CD8-positive, alpha-beta memory T cell (primary cell): ENCODE measurements at regions of chr3 and their contacts with region 1.

Region 1: DNA sequence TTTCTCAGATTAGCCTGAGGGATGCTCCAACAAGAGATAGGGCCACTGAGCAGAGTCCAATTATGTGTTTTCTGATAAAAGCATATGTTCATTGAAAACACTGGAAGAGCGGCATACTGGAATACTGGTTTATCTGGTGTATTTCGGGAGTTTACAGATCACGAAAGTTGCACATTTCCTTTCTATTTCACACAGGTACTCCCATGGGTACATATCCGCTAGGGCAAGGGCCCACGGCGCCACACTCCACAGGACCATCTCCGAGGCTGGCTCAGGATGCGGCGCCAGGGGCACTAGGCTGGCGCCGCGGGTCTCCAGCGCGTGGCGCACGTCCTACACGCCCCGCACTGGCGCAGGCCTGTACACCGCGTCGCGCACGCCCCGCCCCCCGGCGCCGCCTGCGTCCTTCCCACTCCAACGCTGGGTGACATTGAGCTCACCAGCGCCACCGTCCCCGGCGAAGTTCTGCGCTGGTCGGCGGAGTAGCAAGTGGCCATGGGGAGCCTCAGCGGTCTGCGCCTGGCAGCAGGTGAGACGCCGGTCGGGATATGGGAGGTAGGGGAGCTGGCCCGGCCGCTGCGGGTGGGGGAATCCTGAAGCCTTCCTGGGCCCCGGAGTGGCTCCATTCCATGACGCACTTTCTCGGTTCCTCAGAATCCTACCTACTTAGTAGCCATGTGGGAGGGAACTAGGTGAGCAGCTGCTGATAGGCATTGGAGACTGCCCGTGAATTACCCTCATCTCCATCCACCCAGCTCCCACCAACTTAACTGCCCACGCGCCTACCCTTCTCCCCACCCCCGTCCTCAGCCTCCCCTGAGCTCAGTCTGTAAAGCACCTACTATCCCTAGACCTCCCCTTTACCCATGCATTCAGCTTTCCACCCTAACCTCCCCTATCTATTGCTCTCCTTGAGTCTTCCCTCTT is at the start of gene FAM162A:
- DNase-seq: peak; percentile 90 to 94 (median 92)
- H3K4me3 ChIP-seq: peak within 1 kb of the TSS; percentile 74
- H3K4me3 Mint-ChIP-seq: peak within 1 kb of the TSS; percentile 90 to 98 (median 95)
- H3K27ac ChIP-seq: peak within 1 kb of the TSS; percentile 82
- H3K27ac Mint-ChIP-seq: peak within 1 kb of the TSS; percentile 92 to 99 (median 96)
- H3K4me1 ChIP-seq: peaks cover 30% of the 10 kb centered on the region
- H3K4me1 Mint-ChIP-seq: peaks cover 39 to 58% (median 55%) of the 10 kb centered on the region in 3 donors
- H3K27me3 ChIP-seq: no peaks in the 10 kb centered on the region
- H3K27me3 Mint-ChIP-seq: no peaks in the 10 kb centered on the region
- total RNA-seq, gene FAM162A: 62.6 to 63.3 TPM

Region 2: DNA sequence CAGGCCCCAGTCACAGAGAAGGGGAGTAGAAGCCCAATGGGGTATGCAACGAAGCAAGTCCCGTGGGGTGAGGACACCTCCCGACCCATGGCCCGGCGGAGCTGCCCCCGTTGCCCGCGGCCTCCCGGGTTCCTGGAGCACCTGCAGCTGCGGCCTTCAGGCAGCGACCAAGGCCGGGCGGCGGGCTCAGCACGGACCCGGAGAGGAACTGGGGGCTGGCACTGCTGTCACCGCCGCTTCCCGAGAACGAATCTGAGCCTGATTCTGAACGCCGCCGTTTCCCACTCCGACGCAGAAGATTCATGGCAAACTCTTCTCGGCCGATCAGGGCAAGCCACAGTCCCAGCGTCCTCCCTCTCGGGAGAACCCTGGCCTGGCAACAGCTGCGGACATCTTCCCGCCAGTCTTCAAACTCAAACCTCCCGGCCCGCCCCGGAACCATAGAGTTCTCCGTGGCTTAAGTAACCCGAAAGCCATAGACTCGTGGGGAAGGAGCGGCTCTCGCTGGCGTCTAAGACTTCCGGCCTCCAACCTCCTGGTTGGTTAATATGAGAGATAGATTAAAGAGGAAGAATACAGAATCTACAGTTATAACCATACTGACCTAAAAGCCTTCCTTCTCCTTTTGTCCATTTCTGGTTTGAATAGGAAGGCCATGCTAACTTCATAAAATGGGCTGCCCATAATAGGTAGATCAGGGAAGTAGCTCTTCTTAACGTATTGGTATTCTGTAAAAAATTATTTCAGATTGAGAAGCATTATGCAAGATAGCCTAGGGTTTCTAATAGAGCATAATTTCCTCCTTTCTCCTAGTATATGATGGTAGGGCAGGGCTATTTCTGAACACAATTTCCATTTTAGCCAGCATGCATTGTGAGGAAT is 838.2 kb before region 1 on chr3 and contains the start of gene POLQ:
- CTCF ChIA-PET with region 1: interaction called, 14 read pairs
- POLR2A ChIA-PET with region 1: interaction called, 3 read pairs
- DNase-seq: peak; percentile 74 to 91 (median 83)
- H3K4me3 ChIP-seq: peak within 1 kb of the TSS; percentile 78
- H3K4me3 Mint-ChIP-seq: peak within 1 kb of the TSS; percentile 83 to 95 (median 90)
- H3K27ac ChIP-seq: peak within 1 kb of the TSS; percentile 69
- H3K27ac Mint-ChIP-seq: peak within 1 kb of the TSS; percentile 80 to 92 (median 90)
- H3K4me1 ChIP-seq: no peaks in the 10 kb centered on the region
- H3K4me1 Mint-ChIP-seq: peaks cover 14 to 18% (median 15%) of the 10 kb centered on the region in 3 donors
- H3K27me3 ChIP-seq: no peaks in the 10 kb centered on the region
- H3K27me3 Mint-ChIP-seq: no peaks in the 10 kb centered on the region
- total RNA-seq, gene POLQ: 12.4 TPM

Region 3: DNA sequence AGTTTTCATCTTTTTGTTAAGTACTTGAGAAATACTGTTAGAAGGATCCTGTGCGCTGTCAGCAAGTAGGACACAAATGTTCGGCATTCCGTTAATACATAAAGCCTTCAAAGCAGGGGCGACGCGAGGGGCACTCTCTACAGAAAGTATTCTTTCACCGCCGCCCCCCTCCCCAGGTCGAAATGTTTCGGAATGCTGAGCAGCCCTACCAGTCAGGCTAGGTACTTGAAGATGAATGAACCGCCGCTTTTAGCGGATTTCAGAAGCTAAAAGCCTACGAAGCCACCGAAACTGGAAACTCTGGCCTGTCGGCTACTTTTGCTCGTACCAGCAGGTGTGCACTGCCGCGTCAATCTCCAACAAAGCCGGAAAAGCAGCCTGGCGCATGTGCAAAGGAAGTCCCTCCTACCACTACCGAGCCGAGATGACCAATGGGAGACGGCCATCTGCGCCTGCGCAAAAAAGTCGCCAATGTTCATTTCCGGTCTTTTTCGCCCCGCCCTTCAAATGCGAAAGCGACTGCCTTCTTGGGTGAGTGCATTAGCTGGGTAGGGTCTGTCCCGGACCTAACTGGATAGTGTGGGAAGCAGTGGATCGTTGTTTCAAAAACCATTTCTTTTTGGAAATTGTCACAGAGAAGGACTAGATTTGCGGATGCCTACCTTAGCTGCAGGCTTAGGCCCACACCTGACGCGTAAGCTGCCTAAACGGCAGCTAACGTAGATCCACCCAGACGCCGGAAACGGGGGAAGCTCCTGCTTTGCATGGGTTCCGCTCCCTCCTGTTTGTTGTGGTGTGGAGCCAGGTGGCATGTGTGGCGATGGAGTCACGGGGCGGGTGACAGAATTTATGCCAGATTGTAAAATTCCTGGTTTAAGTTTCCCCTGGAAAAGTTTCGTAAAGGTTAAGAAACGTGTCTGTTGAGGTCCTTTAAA is 32.0 kb after region 1 on chr3 and contains the start of gene WDR5B:
- CTCF ChIA-PET with region 1: interaction called, 17 read pairs
- POLR2A ChIA-PET with region 1: interaction called, 45 read pairs
- DNase-seq: peak; percentile 97 to 99 (median 98)
- H3K4me3 ChIP-seq: peak within 1 kb of the TSS; percentile 74
- H3K4me3 Mint-ChIP-seq: peak within 1 kb of the TSS; percentile 93 to 100 (median 97)
- H3K27ac ChIP-seq: peak within 1 kb of the TSS; percentile 91
- H3K27ac Mint-ChIP-seq: peak within 1 kb of the TSS; percentile 97 to 100 (median 100)
- H3K4me1 ChIP-seq: peaks cover 27% of the 10 kb centered on the region
- H3K4me1 Mint-ChIP-seq: peaks cover 42 to 69% (median 65%) of the 10 kb centered on the region in 3 donors
- H3K27me3 ChIP-seq: no peaks in the 10 kb centered on the region
- H3K27me3 Mint-ChIP-seq: peaks cover 0 to 4% of the 10 kb centered on the region in 2 donors
- total RNA-seq, gene WDR5B: 4.6 to 4.8 TPM

Region 4: GRCh38 chr3:122514123-122515019 is 130.3 kb after region 1 on chr3 and contains the start of gene KPNA1:
- CTCF ChIA-PET with region 1: interaction called, 4 read pairs
- POLR2A ChIA-PET with region 1: interaction called, 21 read pairs
- DNase-seq: peak; percentile 79 to 90 (median 90)
- H3K4me3 ChIP-seq: peak within 1 kb of the TSS; percentile 78
- H3K4me3 Mint-ChIP-seq: peak within 1 kb of the TSS; percentile 71 to 93 (median 89)
- H3K27ac ChIP-seq: peak within 1 kb of the TSS; percentile 90
- H3K27ac Mint-ChIP-seq: peak within 1 kb of the TSS; percentile 75 to 100 (median 94)
- H3K4me1 ChIP-seq: peaks cover 35% of the 10 kb centered on the region
- H3K4me1 Mint-ChIP-seq: peaks cover 43 to 49% (median 47%) of the 10 kb centered on the region in 3 donors
- H3K27me3 ChIP-seq: no peaks in the 10 kb centered on the region
- H3K27me3 Mint-ChIP-seq: no peaks in the 10 kb centered on the region
- total RNA-seq, gene KPNA1: 58.6 to 60.4 TPM

Region 5: GRCh38 chr3:122679085-122679881 is 295.2 kb after region 1 on chr3:
- CTCF ChIA-PET with region 1: interaction called, 18 read pairs
- POLR2A ChIA-PET with region 1: interaction called, 5 read pairs
- DNase-seq: peak; percentile 72 to 89 (median 77)
- H3K4me3 ChIP-seq: peak overlapping the region; percentile 92
- H3K4me3 Mint-ChIP-seq: peak overlapping the region; percentile 93 to 99 (median 97)
- H3K27ac ChIP-seq: peak overlapping the region; percentile 93
- H3K27ac Mint-ChIP-seq: peak overlapping the region; percentile 96 to 99 (median 98)
- H3K4me1 ChIP-seq: peaks cover 44% of the 10 kb centered on the region
- H3K4me1 Mint-ChIP-seq: peaks cover 49 to 58% (median 57%) of the 10 kb centered on the region in 3 donors
- H3K27me3 ChIP-seq: no peaks in the 10 kb centered on the region
- H3K27me3 Mint-ChIP-seq: no peaks in the 10 kb centered on the region